Common myeloid progenitor, CD34-positive (primary cell): ENCODE measurements at regions of chr16 and their contacts with region 1.

Region 1: GRCh38 chr16:12819126-12820117 is 15.7 kb upstream of the CPPED1 start:
- DNase-seq: peak; percentile 58 to 72 (median 69)
- H3K4me3 ChIP-seq: no peak overlapping the region
- H3K27ac ChIP-seq: no peak overlapping the region
- H3K4me1 ChIP-seq: peaks cover 0 to 7% (median 2%) of the 10 kb centered on the region in 4 experiments
- H3K27me3 ChIP-seq: no peaks in the 10 kb centered on the region

Region 2: GRCh38 chr16:12455287-12455798 is 364.1 kb before region 1 on chr16:
- CTCF ChIA-PET with region 1: interaction called, 10 read pairs
- POLR2A ChIA-PET with region 1: no interaction called
- DNase-seq: peak; percentile 24 to 50 (median 40)
- H3K4me3 ChIP-seq: no peak overlapping the region
- H3K27ac ChIP-seq: no peak overlapping the region
- H3K4me1 ChIP-seq: peaks cover 2 to 33% (median 25%) of the 10 kb centered on the region in 4 experiments
- H3K27me3 ChIP-seq: no peaks in the 10 kb centered on the region

Region 3: GRCh38 chr16:12573730-12574383 is 245.6 kb before region 1 on chr16:
- CTCF ChIA-PET with region 1: interaction called, 12 read pairs
- POLR2A ChIA-PET with region 1: no interaction called
- DNase-seq: peak; percentile 63 to 79 (median 74)
- H3K4me3 ChIP-seq: no peak overlapping the region
- H3K27ac ChIP-seq: no peak overlapping the region
- H3K4me1 ChIP-seq: peaks cover 0 to 9% (median 2%) of the 10 kb centered on the region in 4 experiments
- H3K27me3 ChIP-seq: no peaks in the 10 kb centered on the region

Region 4: GRCh38 chr16:12796498-12796897 is 22.9 kb before region 1 on chr16:
- CTCF ChIA-PET with region 1: no interaction called
- POLR2A ChIA-PET with region 1: no interaction called
- DNase-seq: peak in 1 of 3 donors; percentile 26
- H3K4me3 ChIP-seq: no peak overlapping the region
- H3K27ac ChIP-seq: no peak overlapping the region
- H3K4me1 ChIP-seq: peaks cover 2 to 13% (median 6%) of the 10 kb centered on the region in 4 experiments
- H3K27me3 ChIP-seq: no peaks in the 10 kb centered on the region